KBM-7 (cell line): ENCODE measurements at regions of chr17 and their contacts with region 1.

Region 1: DNA sequence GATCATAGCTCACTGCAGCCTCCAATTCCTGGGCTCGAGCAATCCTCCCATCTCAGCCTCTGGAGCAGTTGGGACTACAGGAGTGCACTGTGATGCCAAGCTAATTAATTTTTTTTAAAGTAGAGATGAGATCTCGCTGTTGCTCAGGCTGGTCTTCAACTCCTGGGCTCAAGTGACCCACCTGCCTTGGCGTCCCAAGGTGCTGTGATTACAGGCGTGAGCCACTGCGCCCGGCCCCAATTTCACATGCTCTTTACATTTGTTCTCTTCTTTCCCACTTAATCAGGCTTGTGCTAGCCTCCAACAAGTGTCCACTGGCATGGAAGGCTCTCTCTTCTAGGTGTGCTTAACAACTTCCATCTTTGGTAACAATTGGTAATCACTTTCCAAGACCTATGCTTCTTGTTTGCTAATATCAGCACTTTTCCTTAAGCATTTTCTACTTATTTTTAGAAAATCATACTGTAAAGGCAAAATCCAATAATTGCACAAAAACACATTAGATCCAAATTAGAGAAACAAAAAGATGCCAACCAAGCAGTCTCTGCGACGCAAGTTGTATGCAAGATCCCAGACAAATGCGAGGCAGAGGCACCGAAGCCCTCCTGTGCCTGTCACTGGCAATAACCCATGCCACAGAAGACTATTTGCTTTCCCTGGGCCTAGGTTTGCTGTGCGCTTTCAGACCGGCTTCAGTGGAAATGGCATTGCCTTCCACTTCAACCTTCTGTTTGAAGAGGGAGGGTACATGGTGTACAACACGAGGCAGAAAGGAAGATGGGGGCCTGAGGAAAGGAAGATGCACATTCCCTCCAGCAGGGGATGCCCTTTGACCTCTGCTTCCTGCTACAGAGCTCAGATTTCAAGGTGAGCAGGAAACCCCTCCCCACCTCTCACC is 52.6 kb downstream of the NOS2 start:
- DNase-seq: no peak

Region 2: DNA sequence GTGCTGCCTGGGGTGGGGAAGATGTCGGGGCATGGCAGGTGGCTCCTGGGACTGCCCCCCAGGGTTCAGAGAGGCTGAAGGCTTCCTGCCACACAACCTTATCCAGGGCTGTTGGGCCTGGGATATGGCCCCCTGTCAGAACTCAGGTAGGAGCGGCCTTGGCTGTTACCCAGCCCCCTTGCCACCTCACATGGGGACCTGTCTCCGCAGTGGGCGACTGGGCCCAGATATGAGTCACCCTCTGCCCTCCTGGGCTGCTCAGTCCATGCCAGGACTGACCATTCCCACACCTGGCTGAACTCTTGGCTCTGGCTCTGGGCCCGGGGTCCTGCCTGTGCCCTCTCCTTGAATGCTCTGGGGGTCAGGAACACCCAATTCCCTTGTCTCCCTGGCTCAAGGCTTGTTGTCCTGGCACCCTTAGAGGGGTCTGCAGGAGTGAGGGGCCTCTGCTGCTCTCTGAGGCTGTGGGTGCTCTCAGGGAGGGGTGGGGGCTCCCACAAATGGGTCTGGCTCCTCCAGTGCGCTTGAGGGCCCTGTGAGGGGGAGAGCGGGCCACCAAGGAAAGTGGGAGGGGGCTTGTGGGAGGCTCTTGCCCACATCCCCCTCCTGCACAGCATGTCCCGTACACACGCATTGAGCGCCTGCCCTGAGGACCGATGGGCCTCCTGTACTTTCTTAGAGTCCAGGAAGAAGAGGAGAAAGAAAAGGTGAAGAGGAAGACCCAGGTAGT is 80.7 kb before region 1 on chr17:
- in situ Hi-C with region 1: loop called (anchors 10 kb)
- DNase-seq: no peak